ENCODE measurements at regions of chr17 and their contacts with region 1.

Region 1: GRCh38 chr17:47949136-47949759 is 7.9 kb downstream of the PNPO start:
- H3K4me3 ChIP-seq: peak overlapping the region; percentile 2
- H3K27ac ChIP-seq: no peak overlapping the region; the same call in 1 of the 2 replicates
- H3K4me1 ChIP-seq: no peaks in the 10 kb centered on the region
- CTCF ChIP-seq: peak; percentile 96

Region 2: DNA sequence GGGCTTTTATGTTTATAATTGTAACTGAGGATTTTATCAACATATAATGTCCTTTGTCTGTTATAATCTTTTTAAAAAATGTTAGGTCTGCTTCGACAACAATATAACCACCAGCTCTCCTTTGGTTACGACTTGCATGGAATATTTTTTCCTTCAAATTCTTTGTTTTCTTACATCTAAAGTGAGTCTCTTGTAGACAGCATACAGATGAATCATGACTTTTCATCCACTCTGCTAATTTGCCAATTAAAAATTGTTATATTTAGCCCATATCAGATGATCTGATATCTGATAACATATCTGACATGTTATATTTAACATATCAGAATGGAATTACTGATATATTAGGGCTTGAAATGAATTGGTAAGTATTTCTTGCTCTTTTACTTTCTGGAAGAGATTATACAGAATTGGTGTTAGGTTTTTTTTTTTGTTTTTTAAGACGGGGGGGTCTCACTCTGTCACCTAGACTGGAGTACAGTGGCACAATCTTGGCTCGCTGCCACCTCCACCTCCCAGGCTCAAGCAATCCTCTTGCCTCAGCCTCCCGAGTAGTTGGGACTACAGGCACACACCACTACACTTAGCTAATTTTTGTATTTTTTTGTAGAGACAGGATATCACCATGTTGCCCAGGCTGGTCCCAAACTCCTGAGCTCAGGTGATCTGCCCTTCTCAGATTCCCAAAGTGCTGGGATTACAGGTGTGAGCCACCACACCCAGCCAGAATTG is 188.7 kb before region 1 on chr17:
- CTCF ChIA-PET with region 1: no interaction called
- POLR2A ChIA-PET with region 1: no interaction called
- H3K4me3 ChIP-seq: no peak overlapping the region
- H3K27ac ChIP-seq: no peak overlapping the region
- H3K4me1 ChIP-seq: no peaks in the 10 kb centered on the region
- CTCF ChIP-seq: no peak

Region 3: GRCh38 chr17:47792979-47793378 is 156.3 kb before region 1 on chr17:
- CTCF ChIA-PET with region 1: no interaction called
- POLR2A ChIA-PET with region 1: no interaction called
- H3K4me3 ChIP-seq: no peak overlapping the region
- H3K27ac ChIP-seq: no peak overlapping the region
- H3K4me1 ChIP-seq: 0 out of 2 replicates have a peak, but pooled peaks cover 2% of the 10 kb centered on the region
- CTCF ChIP-seq: no peak

Region 4: DNA sequence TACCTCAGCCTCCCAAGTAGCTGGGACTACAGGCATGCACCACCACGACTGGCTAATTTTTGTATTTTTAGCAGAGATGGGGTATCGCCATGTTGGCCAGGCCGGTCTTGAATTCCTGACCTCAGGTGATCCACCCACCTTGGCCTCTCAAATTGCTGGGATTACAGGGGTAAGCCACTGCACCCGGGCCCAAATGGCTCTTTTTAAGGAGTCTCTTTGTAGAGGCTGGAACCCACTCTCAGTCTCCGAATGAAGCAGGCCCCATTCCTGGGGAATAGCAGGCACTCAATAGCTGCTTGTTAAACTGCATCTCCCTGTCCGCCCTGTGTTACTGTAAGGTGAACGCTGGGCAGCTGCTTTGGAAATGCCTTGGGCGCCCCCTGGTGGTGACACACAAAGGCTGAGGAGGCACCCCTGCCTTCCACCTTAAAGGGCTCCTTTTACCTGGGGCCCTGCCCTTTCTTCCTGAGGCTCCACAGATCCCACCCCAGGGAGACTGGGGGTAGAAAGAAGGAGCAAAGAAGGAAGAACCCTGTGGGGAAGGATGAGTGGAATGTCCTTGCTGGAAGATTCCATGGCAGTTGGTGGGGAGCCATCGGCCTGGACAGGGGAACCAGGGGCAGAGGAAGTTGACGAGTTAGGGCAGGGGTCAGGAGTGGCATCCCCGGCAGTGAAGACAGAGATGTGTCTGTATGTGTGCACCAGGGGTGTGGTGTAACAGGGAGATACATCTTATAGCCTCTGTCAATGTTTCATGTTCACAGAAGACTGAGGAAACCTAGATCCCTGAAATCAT is 59.3 kb before region 1 on chr17:
- CTCF ChIA-PET with region 1: interaction called, 22 read pairs
- POLR2A ChIA-PET with region 1: interaction called, 9 read pairs
- H3K4me3 ChIP-seq: no peak overlapping the region
- H3K27ac ChIP-seq: no peak overlapping the region
- H3K4me1 ChIP-seq: peaks cover 2% of the 10 kb centered on the region; the same call in 1 of the 2 replicates
- CTCF ChIP-seq: peak; percentile 94

Region 5: DNA sequence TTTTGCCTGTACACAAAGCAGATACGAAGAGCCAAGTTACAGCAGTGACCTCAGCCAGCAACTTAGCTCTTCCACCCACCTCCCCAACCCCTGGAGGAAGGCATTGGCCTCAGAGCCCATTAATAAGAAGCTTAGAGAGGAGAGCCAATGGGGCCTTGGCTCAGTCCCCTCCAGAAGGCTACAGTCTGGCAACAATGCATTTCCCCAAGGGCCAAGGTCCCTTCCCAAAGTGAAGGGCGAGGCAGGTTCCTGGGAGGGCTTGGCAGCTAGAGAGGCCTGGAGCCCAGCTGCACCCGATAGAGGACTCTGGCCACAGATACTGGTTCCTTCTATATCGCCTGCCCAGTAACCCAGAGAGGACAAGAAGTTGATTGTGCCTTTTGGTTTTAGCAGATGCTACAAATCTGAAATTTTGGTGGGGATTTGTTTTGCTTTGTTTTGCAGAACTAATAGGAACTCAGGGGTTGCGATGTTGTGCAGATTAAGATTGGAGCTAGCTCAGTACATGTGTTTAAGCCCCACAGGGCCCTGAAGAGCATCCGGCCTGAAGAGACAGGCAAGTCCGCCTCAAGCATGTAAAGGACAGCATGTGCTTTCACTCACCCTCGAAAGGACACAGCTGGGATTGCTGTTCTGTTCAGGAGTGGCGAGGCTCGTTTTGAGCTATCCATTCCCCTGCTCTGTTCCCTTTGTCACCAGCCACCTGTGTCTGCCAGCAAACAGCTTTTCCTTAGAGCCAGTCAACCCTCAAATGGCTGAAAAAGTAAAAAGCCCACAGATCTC is 19.8 kb before region 1 on chr17:
- CTCF ChIA-PET with region 1: interaction called, 35 read pairs
- POLR2A ChIA-PET with region 1: interaction called, 3 read pairs
- H3K4me3 ChIP-seq: no peak overlapping the region
- H3K27ac ChIP-seq: no peak overlapping the region
- H3K4me1 ChIP-seq: no peaks in the 10 kb centered on the region
- CTCF ChIP-seq: no peak

Region 6: DNA sequence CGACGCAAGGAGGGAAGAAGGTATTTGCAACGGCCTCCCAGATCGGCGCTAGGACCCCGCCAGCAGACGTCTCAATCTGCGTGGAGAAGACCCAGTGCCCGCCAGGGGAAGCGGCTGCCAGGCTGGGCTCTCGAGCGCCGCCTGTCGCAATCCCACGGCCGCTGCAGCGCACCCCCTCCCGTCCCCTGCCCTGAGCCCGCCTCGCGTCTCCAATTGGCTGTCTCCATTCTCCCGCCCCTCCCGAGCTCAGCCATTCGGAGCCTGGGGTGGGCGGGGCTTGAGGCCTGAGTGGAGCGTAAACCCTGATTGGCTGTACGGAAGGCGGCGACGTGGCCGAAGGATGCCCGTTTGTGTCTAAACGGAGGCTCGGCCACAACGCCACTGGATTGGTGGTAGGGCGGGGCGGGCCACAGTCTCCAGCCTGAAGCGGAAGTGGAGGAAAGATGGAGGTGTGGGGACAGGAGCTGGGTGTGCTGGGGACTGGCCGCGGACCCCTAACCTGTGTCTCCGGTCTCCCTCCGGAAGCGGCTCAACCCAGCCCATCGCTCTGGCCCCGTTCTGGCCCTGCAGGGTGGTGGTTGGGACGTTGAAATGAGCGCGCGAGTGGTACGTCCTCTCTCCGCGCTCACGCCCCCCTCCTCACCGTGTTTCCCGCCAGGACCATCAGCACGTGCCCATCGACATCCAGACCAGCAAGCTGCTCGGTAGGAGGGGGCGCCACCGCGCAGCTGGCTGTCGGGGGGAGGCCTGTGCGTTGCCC is 21.6 kb after region 1 on chr17 and contains the start of gene CDK5RAP3:
- CTCF ChIA-PET with region 1: interaction called, 592 read pairs
- POLR2A ChIA-PET with region 1: interaction called, 26 read pairs
- H3K4me3 ChIP-seq: peak within 1 kb of the TSS; percentile 87
- H3K27ac ChIP-seq: peak within 1 kb of the TSS; percentile 69; the same call in 1 of the 2 replicates
- H3K4me1 ChIP-seq: peaks cover 7% of the 10 kb centered on the region; the same call in 1 of the 2 replicates
- CTCF ChIP-seq: peak; percentile 99

Region 7: GRCh38 chr17:48160177-48161081 is 211.2 kb after region 1 on chr17:
- CTCF ChIA-PET with region 1: no interaction called
- POLR2A ChIA-PET with region 1: no interaction called
- H3K4me3 ChIP-seq: no peak overlapping the region
- H3K27ac ChIP-seq: peak overlapping the region; percentile 70
- H3K4me1 ChIP-seq: peaks cover 36% of the 10 kb centered on the region
- CTCF ChIP-seq: no peak

Measured in HEK293 (cell line).